ENCODE measurements at regions of chr13 and their contacts with region 1.

Region 1: DNA sequence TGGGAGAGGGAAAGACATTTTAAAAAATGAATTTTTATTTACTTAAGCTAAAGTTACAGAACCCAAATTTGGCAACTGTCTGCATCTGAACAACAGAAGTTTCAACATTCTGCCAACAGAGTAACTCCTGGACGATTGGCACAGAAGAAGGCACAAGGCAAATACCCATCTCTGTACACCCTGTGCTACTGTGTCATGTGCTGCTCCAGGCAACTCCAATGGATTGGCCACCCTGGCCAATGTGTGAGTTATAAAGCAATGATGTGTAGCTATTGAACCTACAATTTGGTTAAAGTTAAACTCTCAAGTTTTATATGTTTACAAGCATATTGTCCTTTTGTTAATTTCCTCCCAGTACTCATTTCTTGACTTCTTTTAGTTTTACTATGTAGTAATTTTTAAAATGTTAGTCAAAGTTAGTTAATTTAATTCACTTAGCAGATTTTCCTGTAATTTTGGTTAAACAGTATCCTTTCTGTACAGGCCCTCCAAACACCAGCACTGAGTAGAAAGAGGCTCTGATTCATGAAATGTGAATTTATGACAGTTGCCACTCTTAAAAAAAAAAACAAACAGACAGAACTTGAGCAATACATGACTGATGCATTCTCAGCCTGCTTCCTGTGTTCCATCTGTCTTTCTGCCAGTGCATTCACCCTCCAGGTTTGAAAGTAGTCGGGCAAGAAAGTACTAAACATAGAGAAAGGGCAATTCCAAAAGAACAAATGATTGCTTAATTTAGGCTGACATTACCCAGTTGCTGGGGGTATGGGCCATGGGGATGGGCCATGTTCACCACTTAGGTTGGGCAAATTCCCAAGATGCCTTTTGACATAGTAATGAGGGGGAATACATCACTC is 5.9 kb downstream of the STARD13 start:
- DNase-seq: no peak
- H3K4me3 ChIP-seq: no peak overlapping the region
- H3K27ac ChIP-seq: peak overlapping the region; percentile 33 to 94 (median 76)
- H3K4me1 ChIP-seq: peaks cover 0 to 92% (median 71%) of the 10 kb centered on the region in 4 donors
- H3K27me3 ChIP-seq: no peaks in the 10 kb centered on the region
- CTCF ChIP-seq: no peak
- EP300 ChIP-seq: peak in 1 of 4 donors; percentile 12
- POLR2A ChIP-seq: no peak

Region 2: GRCh38 chr13:33218001-33218400 is 61.6 kb before region 1 on chr13:
- intact Hi-C with region 1: loop called (anchors 5 kb)
- DNase-seq: no peak
- H3K4me3 ChIP-seq: no peak overlapping the region
- H3K27ac ChIP-seq: peak overlapping the region in 2 of 4 donors; percentile 22 to 79
- H3K4me1 ChIP-seq: peaks cover 0 to 72% (median 66%) of the 10 kb centered on the region in 4 donors
- H3K27me3 ChIP-seq: no peaks in the 10 kb centered on the region
- CTCF ChIP-seq: no peak
- EP300 ChIP-seq: no peak
- POLR2A ChIP-seq: no peak